ENCODE measurements at regions of chr5 and their contacts with region 1.

Region 1: GRCh38 chr5:77645158-77645994 is 6.9 kb upstream of the OTP start:
- DNase-seq: peak; percentile 87
- H3K4me3 ChIP-seq: peak overlapping the region in 6 of 8 donors; percentile 21 to 67 (median 29)
- H3K27ac ChIP-seq: no peak overlapping the region
- H3K4me1 ChIP-seq: peaks cover 0 to 37% (median 30%) of the 10 kb centered on the region in 6 donors
- H3K27me3 ChIP-seq: peaks cover 15 to 89% (median 64%) of the 10 kb centered on the region in 7 donors
- CTCF ChIP-seq: peak in 8 of 11 experiments; percentile 29 to 79 (median 70)
- POLR2A ChIP-seq: no peak

Region 2: GRCh38 chr5:77775790-77776553 is 130.6 kb after region 1 on chr5 and contains the start of gene TBCA:
- intact Hi-C with region 1: no loop called
- DNase-seq: peak; percentile 97
- H3K4me3 ChIP-seq: peak within 1 kb of the TSS; percentile 54 to 74 (median 66)
- H3K27ac ChIP-seq: peak within 1 kb of the TSS; percentile 94 to 99 (median 98)
- H3K4me1 ChIP-seq: peaks cover 28 to 53% (median 47%) of the 10 kb centered on the region in 6 donors
- H3K27me3 ChIP-seq: no peaks in the 10 kb centered on the region
- CTCF ChIP-seq: peak in 8 of 11 experiments; percentile 19 to 51 (median 43)
- POLR2A ChIP-seq: peak in 1 of 3 donors; percentile 84
- total RNA-seq, gene TBCA: 92.2 to 140 (median 103) TPM

Region 3: GRCh38 chr5:78008356-78008967 is 363.1 kb after region 1 on chr5:
- intact Hi-C with region 1: loop called (anchors 10 kb)
- DNase-seq: no peak
- H3K4me3 ChIP-seq: no peak overlapping the region
- H3K27ac ChIP-seq: no peak overlapping the region
- H3K4me1 ChIP-seq: peaks cover 0 to 7% (median 0%) of the 10 kb centered on the region in 6 donors
- H3K27me3 ChIP-seq: no peaks in the 10 kb centered on the region
- CTCF ChIP-seq: peak in 7 of 11 experiments; percentile 34 to 65 (median 50)
- POLR2A ChIP-seq: no peak

Measured in spleen (tissue), 13 donors.